WTC11 (cell line): ENCODE measurements at regions of chr16 and their contacts with region 1.

Region 1: GRCh38 chr16:10981697-10982216 is 37.4 kb downstream of the CLEC16A start:
- DNase-seq: peak; percentile 73
- ATAC-seq: peak; percentile 97
- H3K4me3 Mint-ChIP-seq: no peak overlapping the region
- H3K27ac Mint-ChIP-seq: no peak overlapping the region
- H3K4me1 Mint-ChIP-seq: 0 out of 2 replicates have a peak, but pooled peaks cover 15% of the 10 kb centered on the region
- H3K27me3 Mint-ChIP-seq: no peaks in the 10 kb centered on the region
- CTCF ChIP-seq: 0 out of 2 replicates have a peak, but pooled peaks have one; percentile 15

Region 2: GRCh38 chr16:10594367-10594944 is 387.3 kb before region 1 on chr16:
- CTCF ChIA-PET with region 1: no interaction called
- POLR2A ChIA-PET with region 1: no interaction called
- DNase-seq: no peak
- ATAC-seq: no peak
- H3K4me3 Mint-ChIP-seq: no peak overlapping the region
- H3K27ac Mint-ChIP-seq: no peak overlapping the region
- H3K4me1 Mint-ChIP-seq: no peaks in the 10 kb centered on the region
- H3K27me3 Mint-ChIP-seq: no peaks in the 10 kb centered on the region
- CTCF ChIP-seq: no peak

Region 3: DNA sequence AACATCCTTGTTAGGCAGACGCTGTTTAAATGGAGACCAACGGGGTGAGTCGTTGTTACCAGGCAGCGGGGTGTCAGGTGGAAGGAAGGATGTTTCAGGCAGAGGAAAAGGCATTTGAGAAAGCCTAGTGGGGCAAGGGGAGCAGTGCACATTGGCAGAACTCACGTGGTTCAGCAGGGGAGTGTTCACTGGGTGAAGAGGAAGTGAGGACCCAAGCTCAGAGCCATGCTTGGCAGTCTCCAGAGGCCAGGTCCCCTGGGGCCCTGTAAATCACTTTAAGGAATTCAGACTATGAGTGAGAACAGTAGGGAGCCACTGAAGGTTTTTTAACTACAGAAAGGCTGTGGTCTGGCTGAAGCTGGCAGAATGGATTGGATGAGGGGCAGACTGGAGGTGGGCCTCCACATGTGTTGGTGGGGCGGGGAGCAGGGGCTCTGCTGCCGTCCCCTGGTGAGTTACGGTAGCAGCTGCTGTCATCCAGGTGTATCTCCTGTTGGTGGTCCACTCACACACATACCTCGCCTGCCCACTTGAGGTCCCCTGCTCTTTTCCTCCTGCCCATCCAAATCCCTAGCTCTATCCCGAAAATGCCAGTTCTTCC is 32.3 kb before region 1 on chr16:
- CTCF ChIA-PET with region 1: interaction called, 10 read pairs
- POLR2A ChIA-PET with region 1: no interaction called
- DNase-seq: peak; percentile 59
- ATAC-seq: peak; percentile 75
- H3K4me3 Mint-ChIP-seq: no peak overlapping the region
- H3K27ac Mint-ChIP-seq: peak overlapping the region; percentile 18
- H3K4me1 Mint-ChIP-seq: peaks cover 61% of the 10 kb centered on the region
- H3K27me3 Mint-ChIP-seq: no peaks in the 10 kb centered on the region
- CTCF ChIP-seq: no peak

Region 4: DNA sequence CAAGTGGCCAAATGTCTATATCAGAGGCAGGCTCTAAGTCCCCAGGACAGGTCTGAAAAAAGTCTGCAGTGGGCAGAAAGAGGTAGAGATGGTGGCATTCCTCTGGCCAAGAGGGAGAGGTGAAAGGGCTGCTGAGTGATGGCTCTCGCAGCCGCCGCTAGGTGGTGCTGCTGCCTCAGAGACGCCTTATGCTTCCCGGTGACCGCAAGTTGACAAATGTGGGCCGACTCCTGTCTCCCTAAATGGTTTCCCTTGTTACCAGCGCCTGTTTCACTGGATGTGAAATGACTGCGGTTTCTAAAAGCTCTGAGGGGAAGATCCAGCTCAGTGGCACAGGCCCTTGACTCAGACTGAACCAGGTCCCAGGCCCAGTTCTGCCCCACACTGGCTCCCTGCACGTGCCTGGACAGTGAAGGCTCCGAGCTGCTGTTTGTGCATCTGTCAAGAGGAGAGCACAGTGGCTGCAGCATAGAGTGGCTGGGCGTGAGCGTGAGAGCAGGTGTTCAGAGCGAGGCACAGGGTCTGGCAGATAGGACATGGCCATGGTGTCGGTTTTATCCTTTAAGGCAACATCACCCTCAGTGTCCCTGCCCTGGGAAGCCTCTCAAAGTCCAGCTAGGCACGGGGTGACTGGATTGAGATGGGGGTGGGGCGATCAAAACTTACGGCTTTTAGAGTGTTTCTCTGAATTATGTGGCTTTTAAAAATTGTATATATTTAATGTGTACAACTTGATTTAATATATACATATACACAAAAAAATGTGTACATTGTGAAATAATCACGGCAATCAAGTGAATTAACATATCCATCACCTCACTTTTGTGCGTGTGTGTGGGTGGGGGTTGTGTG is 17.5 kb before region 1 on chr16:
- CTCF ChIA-PET with region 1: interaction called, 10 read pairs
- POLR2A ChIA-PET with region 1: no interaction called
- DNase-seq: peak; percentile 85
- ATAC-seq: peak; percentile 91
- H3K4me3 Mint-ChIP-seq: no peak overlapping the region
- H3K27ac Mint-ChIP-seq: no peak overlapping the region
- H3K4me1 Mint-ChIP-seq: peaks cover 4% of the 10 kb centered on the region
- H3K27me3 Mint-ChIP-seq: no peaks in the 10 kb centered on the region
- CTCF ChIP-seq: peak; percentile 96